Dorsolateral prefrontal cortex (tissue), 120 donors: ENCODE measurements at regions of chr14 and their contacts with region 1.

Region 1: GRCh38 chr14:35949985-35950384 is 123.8 kb downstream of the BRMS1L start:
- DNase-seq: no peak
- H3K4me3 ChIP-seq: no peak overlapping the region
- H3K27ac ChIP-seq: peak overlapping the region in 30 of 59 donors; percentile 0 to 68 (median 40)
- H3K27me3 ChIP-seq: no peaks in the 10 kb centered on the region
- CTCF ChIP-seq: no peak

Region 2: DNA sequence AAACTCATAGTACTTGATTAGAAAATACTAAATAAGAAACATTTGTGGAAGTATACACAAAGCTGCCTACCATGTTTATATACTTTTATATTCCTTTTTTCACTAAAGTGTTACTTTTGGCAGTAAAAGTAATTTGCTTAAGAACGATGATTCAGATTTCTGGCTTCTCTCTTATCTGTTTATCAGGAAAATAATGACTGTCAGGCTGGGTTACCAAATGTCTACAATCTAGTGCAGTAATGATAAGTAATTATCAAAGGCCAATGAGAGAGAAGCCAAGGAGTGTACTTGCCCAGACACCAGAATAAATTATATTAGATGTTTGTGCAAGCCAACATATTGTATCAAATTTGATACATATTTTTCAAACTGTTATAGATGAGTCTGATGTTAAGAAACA is 254.3 kb before region 1 on chr14:
- intact Hi-C with region 1: no loop called
- DNase-seq: no peak
- H3K4me3 ChIP-seq: no peak overlapping the region
- H3K27ac ChIP-seq: no peak overlapping the region
- H3K27me3 ChIP-seq: no peaks in the 10 kb centered on the region
- CTCF ChIP-seq: no peak

Region 3: GRCh38 chr14:36227802-36228201 is 277.8 kb after region 1 on chr14:
- intact Hi-C with region 1: loop called in 1 of 2 experiments (anchors 10 kb)
- DNase-seq: no peak
- H3K4me3 ChIP-seq: no peak overlapping the region
- H3K27ac ChIP-seq: no peak overlapping the region
- H3K27me3 ChIP-seq: no peaks in the 10 kb centered on the region
- CTCF ChIP-seq: no peak